ENCODE measurements at regions of chr1 and their contacts with region 1.

Region 1: DNA sequence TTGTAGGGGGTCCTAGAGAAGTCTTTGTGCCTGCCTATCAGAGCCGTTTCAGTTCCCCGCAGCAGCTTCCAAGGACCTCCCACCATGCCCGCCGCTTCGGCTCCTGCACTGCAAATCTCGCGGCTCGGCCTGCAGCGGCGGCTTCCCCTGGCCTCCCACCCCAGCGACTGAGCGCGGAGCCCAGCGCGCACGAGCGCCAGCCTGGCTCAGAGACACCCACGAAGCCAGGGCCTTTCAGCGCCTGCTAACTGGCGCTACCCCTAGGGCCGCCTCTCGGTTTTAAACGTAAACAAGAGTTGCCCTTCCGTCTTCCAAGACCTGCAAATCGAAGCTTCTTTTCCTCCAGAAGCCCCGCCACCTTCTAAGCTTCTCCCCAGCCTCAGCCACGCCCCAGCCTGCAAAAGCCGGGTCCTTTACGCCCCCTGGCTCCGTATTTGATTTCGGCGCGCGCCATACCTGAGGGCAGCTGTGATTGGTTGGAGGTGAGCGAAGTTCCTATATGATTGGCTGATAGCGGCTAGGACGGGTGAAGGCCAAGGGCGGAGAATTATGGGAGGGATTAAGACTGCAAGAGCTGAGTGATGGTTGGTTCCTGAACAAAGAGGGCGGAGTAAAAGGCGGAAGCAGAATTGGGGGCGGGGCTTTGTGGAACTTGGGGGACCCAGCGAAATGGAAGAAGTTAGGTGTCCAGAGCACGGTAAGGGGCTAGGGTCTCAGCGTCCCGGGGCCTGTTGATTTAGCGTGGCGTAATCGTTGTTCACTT is at the start of gene TTF2:
- DNase-seq: peak; percentile 99
- H3K4me3 ChIP-seq: peak within 1 kb of the TSS; percentile 68 to 82 (median 74)
- H3K27ac ChIP-seq: peak within 1 kb of the TSS; percentile 58 to 88 (median 78)
- H3K4me1 ChIP-seq: peaks cover 14 to 16% (median 15%) of the 10 kb centered on the region in 4 donors
- H3K27me3 ChIP-seq: no peaks in the 10 kb centered on the region
- CTCF ChIP-seq: peak; percentile 25 to 37 (median 29)
- EP300 ChIP-seq: no peak
- POLR2A ChIP-seq: no peak
- total RNA-seq, gene TTF2: 6.6 to 12.8 (median 9.0) TPM

Region 2: DNA sequence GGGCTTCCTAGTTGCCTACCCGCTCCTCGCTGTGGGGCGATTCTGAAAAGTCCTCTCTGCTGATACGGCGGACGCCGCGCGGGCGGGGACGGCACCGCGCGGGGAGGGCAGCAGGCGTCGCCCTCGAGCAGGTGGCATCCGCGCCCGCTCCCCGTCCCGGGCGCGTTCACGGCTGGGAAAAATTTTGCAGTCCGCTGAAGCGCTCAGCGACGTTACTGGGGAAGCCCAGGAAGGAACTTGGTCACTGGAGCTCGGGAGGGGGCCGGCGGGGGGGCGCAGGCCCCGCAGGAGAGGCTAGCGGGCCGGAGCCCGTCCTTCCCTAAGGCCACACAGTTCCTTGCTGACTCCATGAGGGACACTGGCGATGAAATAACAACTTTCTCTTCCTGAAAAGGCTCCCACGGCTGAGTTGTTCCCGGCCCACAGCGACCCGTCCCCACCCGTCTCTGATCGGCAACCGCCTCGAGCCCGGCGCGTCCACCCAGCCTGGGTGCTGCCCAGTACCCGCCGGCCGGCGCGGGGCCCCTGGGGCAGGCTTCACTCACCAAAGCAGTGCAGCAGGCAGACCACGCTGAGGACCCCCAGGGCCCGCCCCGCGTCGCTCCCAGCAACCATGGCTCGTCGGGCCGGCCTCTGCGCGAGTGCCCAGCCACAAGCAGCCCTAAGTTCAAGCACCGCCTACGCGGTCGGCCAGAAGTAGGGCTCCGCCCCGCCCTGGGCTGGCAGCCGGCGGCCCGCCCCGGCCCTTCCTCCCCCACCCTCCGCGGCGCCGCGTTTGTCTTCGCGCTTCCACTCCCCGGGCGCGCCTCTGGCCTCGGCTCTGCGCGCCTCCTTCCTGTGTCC is 489.3 kb before region 1 on chr1 and contains the start of gene CD58:
- intact Hi-C with region 1: loop called (anchors 5 kb)
- DNase-seq: peak; percentile 97
- H3K4me3 ChIP-seq: peak within 1 kb of the TSS; percentile 80 to 95 (median 88)
- H3K27ac ChIP-seq: peak within 1 kb of the TSS; percentile 97 to 99 (median 98)
- H3K4me1 ChIP-seq: peaks cover 19 to 43% (median 30%) of the 10 kb centered on the region in 4 donors
- H3K27me3 ChIP-seq: no peaks in the 10 kb centered on the region
- CTCF ChIP-seq: peak; percentile 58 to 81 (median 64)
- EP300 ChIP-seq: no peak
- POLR2A ChIP-seq: peak; percentile 50
- total RNA-seq, gene CD58: 20.3 to 23.4 (median 21.7) TPM

Region 3: GRCh38 chr1:116853670-116854402 is 206.0 kb before region 1 on chr1:
- intact Hi-C with region 1: loop called (anchors 2 kb)
- DNase-seq: no peak
- H3K4me3 ChIP-seq: no peak overlapping the region
- H3K27ac ChIP-seq: no peak overlapping the region
- H3K4me1 ChIP-seq: peaks cover 8 to 32% (median 29%) of the 10 kb centered on the region in 4 donors
- H3K27me3 ChIP-seq: no peaks in the 10 kb centered on the region
- CTCF ChIP-seq: no peak
- EP300 ChIP-seq: no peak
- POLR2A ChIP-seq: no peak

Region 4: GRCh38 chr1:116909510-116910378 is 150.1 kb before region 1 on chr1 and contains the start of gene PTGFRN:
- intact Hi-C with region 1: loop called (anchors 5 kb)
- DNase-seq: no peak
- H3K4me3 ChIP-seq: peak within 1 kb of the TSS; percentile 78 to 90 (median 83)
- H3K27ac ChIP-seq: peak within 1 kb of the TSS; percentile 94 to 96 (median 96)
- H3K4me1 ChIP-seq: peaks cover 10 to 59% (median 52%) of the 10 kb centered on the region in 4 donors
- H3K27me3 ChIP-seq: no peaks in the 10 kb centered on the region
- CTCF ChIP-seq: no peak
- EP300 ChIP-seq: no peak
- POLR2A ChIP-seq: peak; percentile 23
- total RNA-seq, gene PTGFRN: 69.1 to 150 (median 106) TPM

Region 5: GRCh38 chr1:117188170-117188815 is 128.4 kb after region 1 on chr1:
- intact Hi-C with region 1: no loop called
- DNase-seq: no peak
- H3K4me3 ChIP-seq: no peak overlapping the region
- H3K27ac ChIP-seq: no peak overlapping the region
- H3K4me1 ChIP-seq: no peaks in the 10 kb centered on the region
- H3K27me3 ChIP-seq: no peaks in the 10 kb centered on the region
- CTCF ChIP-seq: no peak
- EP300 ChIP-seq: no peak
- POLR2A ChIP-seq: no peak

Region 6: DNA sequence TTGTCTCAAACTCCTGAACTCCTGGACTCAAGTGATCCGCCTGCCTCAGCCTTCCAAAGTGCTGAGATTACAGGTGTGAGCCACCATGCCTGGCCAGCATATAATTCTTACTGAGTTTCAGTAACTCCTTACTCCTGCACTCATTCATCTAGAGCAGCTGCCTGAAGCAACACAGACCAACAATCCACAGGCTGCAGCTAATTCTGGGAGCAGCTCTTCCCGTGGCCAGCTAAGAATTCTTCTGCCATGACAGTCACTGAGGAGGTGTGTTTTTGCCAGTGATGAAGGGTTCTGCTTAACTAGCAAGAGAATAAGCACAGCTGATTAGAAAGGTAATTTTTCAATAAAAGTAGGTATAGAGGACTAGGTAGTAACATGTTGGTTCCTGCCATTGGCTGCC is 145.5 kb after region 1 on chr1:
- intact Hi-C with region 1: no loop called
- DNase-seq: no peak
- H3K4me3 ChIP-seq: no peak overlapping the region
- H3K27ac ChIP-seq: no peak overlapping the region
- H3K4me1 ChIP-seq: no peaks in the 10 kb centered on the region
- H3K27me3 ChIP-seq: peaks cover 0 to 6% (median 0%) of the 10 kb centered on the region in 4 donors
- CTCF ChIP-seq: no peak
- EP300 ChIP-seq: no peak
- POLR2A ChIP-seq: no peak

Region 7: DNA sequence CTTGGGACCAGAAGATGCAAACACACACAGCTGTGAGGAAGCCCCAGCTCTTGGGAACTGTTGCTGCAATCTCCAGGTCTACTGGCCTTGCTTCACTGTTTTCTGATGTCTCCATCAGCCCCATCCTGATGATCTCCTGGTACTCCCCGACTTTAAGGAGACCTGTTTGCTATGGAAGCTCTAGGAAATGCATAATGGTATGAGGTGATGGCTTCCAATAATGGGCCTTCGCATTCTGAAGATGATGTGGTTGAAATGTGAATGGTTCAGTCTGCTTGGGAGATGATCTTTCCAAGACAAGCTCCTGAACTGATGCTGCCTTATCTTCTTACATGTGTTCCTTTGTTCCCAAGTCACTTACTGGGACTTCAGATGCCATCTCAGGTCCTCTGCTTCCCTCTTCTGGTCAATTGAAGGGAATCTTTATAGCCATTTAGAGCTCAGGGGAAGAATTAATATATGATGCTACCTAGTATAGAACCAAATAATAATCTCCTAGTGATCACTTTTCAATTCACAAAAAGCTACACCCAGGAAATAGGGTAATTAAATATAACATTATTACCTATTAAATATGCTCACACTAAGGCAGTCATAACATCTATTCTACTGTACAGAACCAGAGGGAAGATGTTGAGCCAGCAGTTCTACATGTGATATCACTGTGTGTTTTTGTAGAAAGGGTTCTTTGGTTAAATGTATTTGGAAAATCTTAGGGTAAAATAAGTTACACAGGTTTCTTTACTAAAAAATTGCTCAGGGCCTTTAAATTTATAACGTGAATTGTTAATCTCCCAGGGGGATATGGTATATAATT is 224.7 kb after region 1 on chr1:
- intact Hi-C with region 1: loop called (anchors 10 kb)
- DNase-seq: no peak
- H3K4me3 ChIP-seq: no peak overlapping the region
- H3K27ac ChIP-seq: no peak overlapping the region
- H3K4me1 ChIP-seq: no peaks in the 10 kb centered on the region
- H3K27me3 ChIP-seq: no peaks in the 10 kb centered on the region
- CTCF ChIP-seq: peak; percentile 25 to 41 (median 33)
- EP300 ChIP-seq: no peak
- POLR2A ChIP-seq: no peak